Heart right ventricle (tissue), 16 donors: ENCODE measurements at regions of chr3 and their contacts with region 1.

Region 1: DNA sequence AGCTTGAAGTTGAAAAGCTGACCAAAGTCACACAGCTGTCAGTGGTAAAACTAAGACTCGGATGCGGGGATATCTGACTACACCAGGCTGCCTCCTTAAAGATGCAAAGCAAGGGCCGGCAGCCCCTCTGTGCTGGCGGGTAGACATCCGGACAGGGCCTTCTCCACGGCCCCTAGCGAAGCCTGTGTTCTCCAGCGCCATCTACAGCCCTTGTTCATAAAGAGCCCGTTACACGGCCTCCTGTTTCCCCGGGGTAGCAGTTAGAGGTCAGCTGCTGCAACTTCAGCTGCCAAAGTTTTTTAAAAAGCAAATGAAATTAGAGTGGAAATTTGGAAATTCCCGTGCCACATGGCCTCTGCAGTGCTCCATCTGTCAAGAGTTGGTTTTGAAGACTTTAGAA is 383.0 kb downstream of the TBL1XR1 start:
- DNase-seq: peak; percentile 47 to 59
- ATAC-seq: peak; percentile 72 to 92 (median 84)
- H3K4me3 ChIP-seq: no peak overlapping the region
- H3K27ac ChIP-seq: no peak overlapping the region
- H3K4me1 ChIP-seq: peaks cover 0 to 7% (median 0%) of the 10 kb centered on the region in 9 donors
- H3K27me3 ChIP-seq: no peaks in the 10 kb centered on the region
- CTCF ChIP-seq: peak; percentile 34 to 69 (median 64)

Region 2: GRCh38 chr3:176650478-176650877 is 163.8 kb before region 1 on chr3:
- intact Hi-C with region 1: loop called in 1 of 10 experiments (anchors 10 kb)
- DNase-seq: no peak
- ATAC-seq: no peak
- H3K4me3 ChIP-seq: no peak overlapping the region
- H3K27ac ChIP-seq: no peak overlapping the region
- H3K4me1 ChIP-seq: no peaks in the 10 kb centered on the region
- H3K27me3 ChIP-seq: no peaks in the 10 kb centered on the region
- CTCF ChIP-seq: no peak

Region 3: GRCh38 chr3:176855956-176856355 is 41.7 kb after region 1 on chr3:
- intact Hi-C with region 1: no loop called
- DNase-seq: no peak
- ATAC-seq: no peak
- H3K4me3 ChIP-seq: no peak overlapping the region
- H3K27ac ChIP-seq: no peak overlapping the region
- H3K4me1 ChIP-seq: no peaks in the 10 kb centered on the region
- H3K27me3 ChIP-seq: no peaks in the 10 kb centered on the region
- CTCF ChIP-seq: no peak